Pancreas (tissue), 10 donors: ENCODE measurements at regions of chr15 and their contacts with region 1.

Region 1: DNA sequence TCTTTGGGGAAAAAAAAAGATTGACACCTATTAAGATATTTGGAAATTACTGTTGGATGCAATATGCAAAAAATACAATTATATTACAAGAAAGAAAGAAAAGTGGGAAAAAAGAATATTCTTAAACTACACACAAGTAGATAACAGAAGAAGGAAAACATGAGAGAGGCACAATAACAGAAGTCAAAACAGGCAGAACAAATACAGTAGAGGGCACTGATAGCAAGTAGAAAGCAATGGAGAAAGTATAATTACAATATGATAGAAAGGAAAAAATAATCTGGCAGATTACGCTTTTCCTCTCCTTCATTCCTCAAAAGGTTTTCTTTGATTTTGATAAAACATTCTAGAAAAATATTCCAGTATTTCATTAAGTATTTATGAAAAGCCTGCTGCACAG is 72.1 kb downstream of the ADAM10 start:
- DNase-seq: no peak
- ATAC-seq: no peak
- H3K4me3 ChIP-seq: no peak overlapping the region
- H3K27ac ChIP-seq: no peak overlapping the region
- H3K4me1 ChIP-seq: no peaks in the 10 kb centered on the region
- H3K27me3 ChIP-seq: no peaks in the 10 kb centered on the region
- CTCF ChIP-seq: no peak

Region 2: DNA sequence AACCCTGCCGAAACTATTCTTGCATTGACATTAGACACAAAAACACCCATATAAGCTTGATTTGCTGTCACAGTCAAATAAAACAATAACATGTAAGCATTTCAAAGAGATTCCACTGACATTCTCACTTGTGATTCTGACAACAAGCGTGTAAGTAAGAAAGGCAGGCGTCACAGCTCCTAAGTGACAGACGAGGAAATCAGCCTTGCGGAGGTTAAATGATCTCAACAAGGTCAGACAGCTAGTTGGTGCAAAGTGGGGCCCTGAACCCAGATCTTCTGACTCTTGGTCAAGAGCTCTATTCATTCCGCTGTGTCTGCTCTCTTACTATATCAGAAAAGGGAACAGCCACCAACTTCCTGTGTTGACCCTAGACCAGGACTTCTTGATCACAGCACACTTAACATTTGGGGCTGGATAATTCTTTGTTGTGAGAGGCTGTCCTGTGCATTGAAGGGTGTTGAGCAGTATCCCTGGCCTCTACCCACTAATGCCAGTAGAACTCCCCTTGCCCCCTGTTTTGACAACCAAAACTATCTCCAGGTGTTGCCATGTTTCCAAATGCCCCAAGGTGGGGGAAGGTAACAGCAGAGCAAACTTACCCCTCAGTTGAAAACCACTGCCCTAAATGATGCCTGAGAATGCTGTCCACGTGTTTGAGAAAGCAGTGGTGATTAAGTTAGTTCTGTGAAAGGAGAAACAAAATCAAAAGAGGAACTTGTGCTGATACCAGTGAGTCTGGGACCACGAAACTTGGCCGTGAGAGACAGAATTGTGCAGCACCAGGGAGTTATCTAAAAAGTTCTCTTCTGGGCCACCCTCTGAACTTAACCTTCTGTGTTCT is 159.5 kb before region 1 on chr15:
- intact Hi-C with region 1: no loop called
- DNase-seq: no peak
- ATAC-seq: peak in 1 of 4 donors; percentile 40
- H3K4me3 ChIP-seq: no peak overlapping the region
- H3K27ac ChIP-seq: peak overlapping the region in 2 of 4 donors; percentile 0 to 16
- H3K4me1 ChIP-seq: no peaks in the 10 kb centered on the region
- H3K27me3 ChIP-seq: no peaks in the 10 kb centered on the region
- CTCF ChIP-seq: no peak

Region 3: GRCh38 chr15:58724466-58724865 is 47.0 kb after region 1 on chr15:
- intact Hi-C with region 1: loop called in 1 of 3 experiments (anchors 10 kb)
- DNase-seq: no peak
- ATAC-seq: peak in 3 of 4 donors; percentile 54 to 77 (median 65)
- H3K4me3 ChIP-seq: no peak overlapping the region
- H3K27ac ChIP-seq: no peak overlapping the region
- H3K4me1 ChIP-seq: no peaks in the 10 kb centered on the region
- H3K27me3 ChIP-seq: no peaks in the 10 kb centered on the region
- CTCF ChIP-seq: no peak

Region 4: DNA sequence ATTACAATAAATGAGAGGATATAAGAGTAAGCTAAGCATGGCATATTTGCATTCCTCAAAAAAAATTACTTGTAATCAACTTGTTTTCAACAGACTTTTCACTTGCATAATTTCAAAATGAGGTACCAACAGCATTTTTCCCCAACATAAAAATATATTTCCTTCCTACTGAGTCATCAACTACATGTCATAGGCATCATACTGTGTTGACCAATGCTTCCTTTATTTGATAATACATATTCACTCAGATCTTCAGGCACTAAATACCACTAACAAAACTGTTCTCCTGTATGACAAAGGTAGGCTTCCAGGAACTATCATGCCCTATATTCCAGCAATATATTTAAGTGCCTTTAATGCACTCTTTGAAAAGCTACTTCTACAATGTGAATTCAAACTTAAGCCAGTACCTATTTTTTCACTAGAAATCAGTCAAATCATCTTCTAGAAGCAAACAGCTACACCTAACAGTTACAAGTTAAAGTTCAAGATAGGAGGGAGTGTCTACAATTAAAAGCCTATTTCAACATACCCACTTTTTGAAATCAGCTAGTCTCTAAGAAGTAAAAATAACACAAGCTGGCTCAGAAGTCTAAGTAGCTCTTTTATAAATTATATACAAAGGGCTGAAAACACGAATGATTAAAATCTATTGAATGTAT is 60.8 kb after region 1 on chr15:
- intact Hi-C with region 1: no loop called
- DNase-seq: no peak
- ATAC-seq: peak in 3 of 4 donors; percentile 44 to 70 (median 52)
- H3K4me3 ChIP-seq: no peak overlapping the region
- H3K27ac ChIP-seq: no peak overlapping the region
- H3K4me1 ChIP-seq: peaks cover 0 to 17% (median 0%) of the 10 kb centered on the region in 3 donors
- H3K27me3 ChIP-seq: no peaks in the 10 kb centered on the region
- CTCF ChIP-seq: no peak

Region 5: DNA sequence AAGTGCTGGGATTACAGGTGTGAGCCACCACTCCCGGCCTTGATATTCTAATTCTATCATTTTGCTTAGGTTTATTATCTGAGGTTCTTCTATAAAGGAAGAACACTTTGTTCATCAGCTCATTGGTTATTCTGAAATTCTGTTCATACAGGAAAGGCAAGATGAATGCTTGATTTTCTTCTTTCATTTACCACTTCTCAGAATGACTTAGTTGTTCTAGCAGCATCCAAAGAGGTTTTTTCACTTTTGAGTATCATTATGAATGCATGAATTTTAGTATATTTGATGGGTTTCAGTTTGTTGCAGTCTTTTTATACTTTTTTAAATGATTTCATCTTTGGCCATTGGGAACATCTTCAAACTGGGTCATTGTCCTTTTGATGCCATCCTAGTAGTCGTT is 361.8 kb after region 1 on chr15:
- intact Hi-C with region 1: no loop called
- DNase-seq: no peak
- ATAC-seq: no peak
- H3K4me3 ChIP-seq: no peak overlapping the region
- H3K27ac ChIP-seq: no peak overlapping the region
- H3K4me1 ChIP-seq: no peaks in the 10 kb centered on the region
- H3K27me3 ChIP-seq: no peaks in the 10 kb centered on the region
- CTCF ChIP-seq: no peak